ENCODE measurements at regions of chr5 and their contacts with region 1.

Region 1: DNA sequence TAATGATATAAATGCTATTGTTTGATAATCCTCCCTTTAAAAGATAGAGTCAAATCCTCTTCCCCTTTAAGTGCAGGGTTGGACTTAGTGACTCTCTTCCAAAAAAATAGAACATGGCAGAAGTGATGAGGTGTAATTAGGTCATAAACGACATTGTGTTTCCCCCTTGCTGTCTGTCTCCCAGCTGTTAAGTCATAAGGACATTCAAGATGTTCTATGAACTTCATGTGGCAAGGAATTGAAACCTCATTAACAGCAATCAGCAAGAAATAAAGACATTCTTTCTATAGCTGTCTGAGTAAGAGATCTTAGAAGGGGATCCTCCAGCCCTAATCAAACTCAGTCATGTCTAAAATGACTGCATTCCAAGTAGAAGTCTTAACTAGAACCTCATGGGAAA is 3.3 kb upstream of the SLC25A46 start:
- DNase-seq: no peak
- H3K4me3 ChIP-seq: no peak overlapping the region
- H3K27ac ChIP-seq: no peak overlapping the region
- H3K4me1 ChIP-seq: peaks cover 6 to 24% (median 14%) of the 10 kb centered on the region in 4 donors
- H3K27me3 ChIP-seq: no peaks in the 10 kb centered on the region
- CTCF ChIP-seq: no peak
- EP300 ChIP-seq: no peak
- POLR2A ChIP-seq: no peak

Region 2: GRCh38 chr5:110751902-110752762 is 16.6 kb after region 1 on chr5:
- in situ Hi-C with region 1: no loop called
- intact Hi-C with region 1: loop called (anchors 1 kb)
- DNase-seq: no peak
- H3K4me3 ChIP-seq: no peak overlapping the region
- H3K27ac ChIP-seq: peak overlapping the region in 2 of 4 donors; percentile 20 to 21
- H3K4me1 ChIP-seq: no peaks in the 10 kb centered on the region
- H3K27me3 ChIP-seq: no peaks in the 10 kb centered on the region
- CTCF ChIP-seq: no peak
- EP300 ChIP-seq: no peak
- POLR2A ChIP-seq: no peak